Mammary epithelial cell (primary cell): ENCODE measurements at regions of chr2 and their contacts with region 1.

Region 1: GRCh38 chr2:55871637-55872036 is 51.9 kb downstream of the EFEMP1 start:
- DNase-seq: no peak
- H3K4me3 ChIP-seq: no peak overlapping the region
- H3K27ac ChIP-seq: no peak overlapping the region
- H3K4me1 ChIP-seq: no peaks in the 10 kb centered on the region
- H3K27me3 ChIP-seq: no peaks in the 10 kb centered on the region
- CTCF ChIP-seq: no peak

Region 2: DNA sequence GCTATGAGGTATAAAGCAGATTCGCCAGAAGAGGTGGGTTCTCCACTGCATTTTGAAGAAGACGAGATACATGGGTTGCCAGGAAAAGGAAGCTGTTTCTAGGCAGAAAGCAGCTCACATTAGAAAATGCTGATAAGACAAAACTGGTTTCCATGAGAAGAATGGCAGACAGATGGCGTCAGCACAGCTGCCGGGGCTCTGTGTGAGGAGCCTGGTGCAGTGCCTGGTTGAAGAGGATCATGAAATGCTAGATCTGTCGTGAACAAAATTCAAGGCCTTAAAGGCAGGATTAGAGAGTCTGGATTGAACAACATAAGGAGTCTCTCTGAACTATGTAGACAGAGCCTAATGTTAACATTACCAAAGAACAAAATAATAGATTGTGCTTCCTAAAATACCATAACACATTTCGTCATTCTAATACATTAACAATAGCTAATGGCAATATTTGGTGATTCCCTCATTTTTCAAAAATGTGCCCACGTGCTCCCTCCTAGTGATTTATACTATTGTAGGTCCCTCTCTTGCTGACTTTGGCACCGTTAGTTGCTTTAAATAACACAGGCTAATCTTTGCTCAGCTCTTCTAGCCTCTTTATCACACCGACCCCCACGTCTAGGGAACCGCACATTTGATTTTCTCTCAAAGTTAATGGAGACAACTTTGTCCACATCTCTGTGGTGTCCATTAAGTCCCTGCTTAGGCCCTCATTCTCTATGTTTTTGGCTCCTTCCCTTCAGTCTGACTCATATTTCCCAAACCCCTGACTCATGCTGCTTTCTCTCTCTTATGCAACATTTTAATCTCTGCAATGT is 13.7 kb after region 1 on chr2:
- CTCF ChIA-PET with region 1: no interaction called
- dilution Hi-C with region 1: no loop called
- in situ Hi-C with region 1: no loop called
- intact Hi-C with region 1: loop called (anchors 2 kb)
- DNase-seq: peak; percentile 90
- H3K4me3 ChIP-seq: no peak overlapping the region
- H3K27ac ChIP-seq: peak overlapping the region; percentile 80
- H3K4me1 ChIP-seq: peaks cover 48% of the 10 kb centered on the region
- H3K27me3 ChIP-seq: no peaks in the 10 kb centered on the region
- CTCF ChIP-seq: no peak